Ovary (tissue), 10 donors: ENCODE measurements at regions of chr16 and their contacts with region 1.

Region 1: GRCh38 chr16:56931892-56932720 is at the start of gene HERPUD1:
- DNase-seq: peak; percentile 98 to 99 (median 99)
- H3K4me3 ChIP-seq: peak within 1 kb of the TSS; percentile 95
- H3K27ac ChIP-seq: peak within 1 kb of the TSS; percentile 94 to 98
- H3K4me1 ChIP-seq: peaks cover 4% of the 10 kb centered on the region
- H3K27me3 ChIP-seq: no peaks in the 10 kb centered on the region
- CTCF ChIP-seq: peak in 2 of 3 donors; percentile 8 to 31
- EP300 ChIP-seq: peak; percentile 72
- POLR2A ChIP-seq: peak; percentile 97
- total RNA-seq, gene HERPUD1: 95.4 to 299 (median 170) TPM

Region 2: DNA sequence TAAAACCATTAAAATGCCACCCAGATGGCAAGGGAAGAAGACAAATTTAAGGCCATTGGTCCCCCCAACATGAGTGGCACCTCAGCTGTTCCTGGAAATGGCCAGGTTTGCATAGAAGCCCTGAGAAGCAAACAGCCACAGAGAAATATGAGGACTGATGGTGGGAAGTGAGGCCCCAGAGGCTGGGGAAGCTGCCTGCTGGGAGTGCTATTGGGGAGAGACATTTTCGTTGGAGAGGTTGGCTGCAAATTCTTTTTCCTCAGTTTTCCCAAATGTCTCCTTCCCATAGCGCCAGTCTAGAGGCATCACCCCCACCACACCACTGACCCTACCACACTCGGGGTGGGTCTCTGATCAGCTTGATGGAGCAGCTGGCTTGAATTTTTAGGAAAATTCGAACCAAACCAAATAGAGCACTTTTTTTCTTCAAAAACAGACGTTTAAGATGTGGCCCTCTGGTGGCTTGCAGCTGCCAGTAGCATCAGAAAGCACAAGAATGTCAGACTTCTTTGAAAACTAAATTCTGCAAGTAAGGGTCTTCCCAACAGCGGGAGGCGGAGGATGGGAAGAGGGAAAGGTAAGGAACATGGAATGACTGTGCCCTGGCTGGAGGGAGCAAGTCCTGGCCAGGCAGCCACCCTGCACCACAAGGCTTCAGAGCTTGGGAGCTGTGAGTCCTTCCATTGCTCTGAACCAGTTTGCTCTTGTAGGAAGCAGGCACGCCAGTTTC is 80.3 kb before region 1 on chr16:
- intact Hi-C with region 1: loop called in 1 of 4 experiments (anchors 5 kb)
- DNase-seq: peak in 1 of 5 donors; percentile 35
- H3K4me3 ChIP-seq: no peak overlapping the region
- H3K27ac ChIP-seq: no peak overlapping the region
- H3K4me1 ChIP-seq: peaks cover 16% of the 10 kb centered on the region
- H3K27me3 ChIP-seq: no peaks in the 10 kb centered on the region
- CTCF ChIP-seq: no peak
- EP300 ChIP-seq: no peak
- POLR2A ChIP-seq: no peak

Region 3: GRCh38 chr16:56911771-56912571 is 20.1 kb before region 1 on chr16:
- intact Hi-C with region 1: loop called in 1 of 4 experiments (anchors 2 kb)
- DNase-seq: peak in 2 of 5 donors; percentile 38 to 67
- H3K4me3 ChIP-seq: no peak overlapping the region
- H3K27ac ChIP-seq: peak overlapping the region in 1 of 2 donors; percentile 45
- H3K4me1 ChIP-seq: peaks cover 35% of the 10 kb centered on the region
- H3K27me3 ChIP-seq: no peaks in the 10 kb centered on the region
- CTCF ChIP-seq: no peak
- EP300 ChIP-seq: no peak
- POLR2A ChIP-seq: no peak

Region 4: DNA sequence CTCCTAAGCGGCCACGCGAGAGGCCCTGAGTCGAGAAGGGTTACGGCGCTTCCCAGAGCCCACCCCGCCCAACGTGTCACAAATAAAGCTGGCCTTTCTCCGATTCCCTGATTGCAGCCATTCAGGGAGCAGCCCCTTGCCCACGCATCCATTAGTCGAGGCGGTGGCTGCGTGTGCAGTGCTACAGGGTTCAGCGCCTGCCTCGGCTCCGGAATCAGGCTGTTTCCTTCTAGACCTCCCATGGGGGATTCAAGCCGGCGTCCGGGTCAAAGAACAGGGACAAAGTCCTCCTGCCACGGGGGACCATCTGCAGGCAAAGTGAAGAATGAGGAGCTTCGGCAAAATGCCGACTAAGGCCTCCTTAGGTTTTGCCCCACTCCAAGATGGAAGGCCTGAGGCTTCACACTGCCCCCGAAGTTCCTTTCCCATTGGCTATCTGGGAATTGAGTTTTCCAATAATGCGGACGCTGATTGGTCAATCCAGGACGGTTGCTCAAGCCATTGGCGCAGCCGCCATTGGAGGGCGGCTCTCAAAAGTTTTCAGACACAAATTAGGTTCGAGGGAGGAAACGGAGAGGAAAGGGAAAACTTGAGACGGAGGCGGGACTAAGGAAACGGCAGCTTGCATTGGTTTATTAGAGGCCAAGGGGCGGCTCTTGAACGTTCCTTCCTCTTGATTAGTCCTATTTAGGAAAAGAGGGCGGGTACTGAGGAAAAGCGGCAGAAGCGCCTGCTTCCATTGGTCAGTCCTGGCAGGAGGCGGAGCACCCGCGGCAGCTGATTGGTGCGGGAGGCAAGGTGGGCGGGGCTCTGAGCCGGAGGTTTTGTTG is 803.0 kb after region 1 on chr16:
- intact Hi-C with region 1: loop called in 1 of 4 experiments (anchors 10 kb)
- DNase-seq: peak; percentile 98 to 99 (median 98)
- H3K4me3 ChIP-seq: peak overlapping the region; percentile 89
- H3K27ac ChIP-seq: peak overlapping the region in 1 of 2 donors; percentile 74
- H3K4me1 ChIP-seq: peaks cover 2% of the 10 kb centered on the region
- H3K27me3 ChIP-seq: no peaks in the 10 kb centered on the region
- CTCF ChIP-seq: no peak
- EP300 ChIP-seq: no peak
- POLR2A ChIP-seq: peak; percentile 36